Gastrocnemius medialis (tissue), 4 donors: ENCODE measurements at regions of chr18 and their contacts with region 1.

Region 1: DNA sequence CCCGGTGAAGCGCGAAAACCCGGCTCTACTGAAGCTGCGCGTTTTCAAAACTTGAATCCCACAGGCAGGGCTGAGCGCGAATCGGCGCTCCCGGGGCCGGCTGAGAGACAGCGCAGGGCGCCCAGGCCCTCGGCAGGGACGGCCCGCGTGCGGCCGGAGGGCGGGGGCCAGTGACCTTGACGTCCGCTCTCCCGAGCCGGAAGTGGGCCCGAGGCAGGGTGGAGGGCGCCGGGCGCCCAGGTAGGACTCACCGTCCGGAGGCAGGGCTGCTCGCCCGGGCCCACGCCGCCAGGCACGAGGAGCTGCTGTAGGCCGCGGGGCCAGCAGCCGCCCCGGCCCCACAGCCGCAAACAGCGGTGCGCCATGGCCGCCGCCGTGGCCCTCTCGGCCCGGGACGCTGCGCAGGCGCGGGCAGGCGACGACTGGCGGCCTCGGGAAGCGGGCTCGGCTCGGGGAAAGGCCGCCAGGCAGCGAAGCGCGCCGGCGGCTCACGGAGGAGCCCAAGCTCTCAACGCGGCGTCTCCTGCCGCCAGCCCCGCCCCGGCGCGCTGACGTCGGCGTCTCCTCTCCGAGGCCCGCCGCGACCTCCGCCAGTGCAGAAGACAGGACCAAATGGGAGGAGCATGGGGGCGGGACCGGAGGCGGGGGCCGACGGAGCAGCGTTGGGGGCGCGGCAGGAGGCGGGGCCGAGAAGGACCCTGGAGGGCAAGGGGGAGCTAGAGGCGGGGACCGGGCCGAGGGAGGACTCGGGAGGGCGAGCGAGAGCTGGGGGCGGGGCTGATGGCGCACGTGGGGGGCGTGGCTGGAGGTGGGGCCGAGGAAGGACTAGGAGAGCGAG is at the start of gene AFG3L2:
- DNase-seq: peak; percentile 100
- ATAC-seq: peak; percentile 79 to 80
- H3K4me3 ChIP-seq: peak within 1 kb of the TSS; percentile 64 to 94 (median 72)
- H3K27ac ChIP-seq: peak within 1 kb of the TSS; percentile 95 to 100 (median 97)
- H3K4me1 ChIP-seq: peaks cover 42 to 43% of the 10 kb centered on the region in 2 donors
- H3K27me3 ChIP-seq: no peaks in the 10 kb centered on the region
- CTCF ChIP-seq: peak in 2 of 5 experiments; percentile 6 to 21
- POLR2A ChIP-seq: peak; percentile 98 to 99
- total RNA-seq, gene AFG3L2: 102 to 166 (median 124) TPM

Region 2: DNA sequence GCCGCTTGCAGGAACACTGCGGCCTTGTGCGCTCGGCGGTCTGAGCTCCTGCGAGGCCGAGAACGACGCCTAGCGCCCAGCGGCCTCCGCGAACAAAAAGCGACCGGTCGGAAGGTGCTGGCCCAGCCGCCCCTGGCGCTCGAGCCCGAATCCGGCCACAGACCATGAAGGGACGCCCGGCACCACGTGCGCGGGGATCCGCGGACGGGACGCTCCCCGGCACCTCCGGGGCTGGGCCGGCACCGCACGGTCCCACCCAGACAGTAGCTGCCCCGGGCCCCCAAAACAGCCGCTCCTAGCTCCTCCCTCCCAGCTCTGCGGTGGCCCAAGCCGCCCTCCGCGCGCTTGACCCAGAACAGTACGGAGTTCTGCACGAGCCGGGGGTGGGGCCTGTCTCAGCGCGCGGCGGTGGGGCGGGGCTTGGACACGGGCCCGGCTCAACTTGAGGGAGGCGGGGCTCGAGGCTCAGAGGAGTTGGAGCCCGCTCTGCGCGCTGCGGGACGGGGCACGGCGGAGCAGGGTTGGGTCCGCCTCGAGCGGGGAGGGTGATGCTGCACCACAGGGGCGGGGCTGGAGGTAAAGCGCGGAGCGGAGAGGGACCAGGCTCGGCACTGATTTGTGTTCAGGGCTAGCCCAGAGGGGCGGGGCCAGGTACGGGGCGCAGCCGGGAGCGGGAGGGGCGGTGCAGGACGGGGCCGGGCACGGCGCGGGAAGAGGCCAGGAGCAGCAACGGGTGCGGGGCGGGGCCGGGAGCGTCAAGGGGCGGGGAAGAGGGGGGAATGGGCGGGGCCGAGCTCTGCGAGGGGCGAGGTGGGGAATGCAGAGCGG is 396.2 kb before region 1 on chr18:
- in situ Hi-C with region 1: no loop called
- intact Hi-C with region 1: loop called (anchors 10 kb)
- DNase-seq: peak; percentile 99
- ATAC-seq: peak; percentile 67 to 72
- H3K4me3 ChIP-seq: peak overlapping the region; percentile 71 to 94 (median 86)
- H3K27ac ChIP-seq: peak overlapping the region; percentile 97 to 100 (median 99)
- H3K4me1 ChIP-seq: peaks cover 21 to 38% of the 10 kb centered on the region in 2 donors
- H3K27me3 ChIP-seq: no peaks in the 10 kb centered on the region
- CTCF ChIP-seq: peak in 4 of 5 experiments; percentile 14 to 41 (median 21)
- POLR2A ChIP-seq: peak; percentile 98 to 99

Region 3: GRCh38 chr18:12406371-12407111 is 29.6 kb after region 1 on chr18:
- in situ Hi-C with region 1: no loop called
- intact Hi-C with region 1: loop called (anchors 1 kb)
- DNase-seq: no peak
- ATAC-seq: no peak
- H3K4me3 ChIP-seq: no peak overlapping the region
- H3K27ac ChIP-seq: no peak overlapping the region
- H3K4me1 ChIP-seq: peaks cover 0 to 6% of the 10 kb centered on the region in 2 donors
- H3K27me3 ChIP-seq: peaks cover 16 to 36% (median 33%) of the 10 kb centered on the region in 3 donors
- CTCF ChIP-seq: no peak
- POLR2A ChIP-seq: no peak

Region 4: DNA sequence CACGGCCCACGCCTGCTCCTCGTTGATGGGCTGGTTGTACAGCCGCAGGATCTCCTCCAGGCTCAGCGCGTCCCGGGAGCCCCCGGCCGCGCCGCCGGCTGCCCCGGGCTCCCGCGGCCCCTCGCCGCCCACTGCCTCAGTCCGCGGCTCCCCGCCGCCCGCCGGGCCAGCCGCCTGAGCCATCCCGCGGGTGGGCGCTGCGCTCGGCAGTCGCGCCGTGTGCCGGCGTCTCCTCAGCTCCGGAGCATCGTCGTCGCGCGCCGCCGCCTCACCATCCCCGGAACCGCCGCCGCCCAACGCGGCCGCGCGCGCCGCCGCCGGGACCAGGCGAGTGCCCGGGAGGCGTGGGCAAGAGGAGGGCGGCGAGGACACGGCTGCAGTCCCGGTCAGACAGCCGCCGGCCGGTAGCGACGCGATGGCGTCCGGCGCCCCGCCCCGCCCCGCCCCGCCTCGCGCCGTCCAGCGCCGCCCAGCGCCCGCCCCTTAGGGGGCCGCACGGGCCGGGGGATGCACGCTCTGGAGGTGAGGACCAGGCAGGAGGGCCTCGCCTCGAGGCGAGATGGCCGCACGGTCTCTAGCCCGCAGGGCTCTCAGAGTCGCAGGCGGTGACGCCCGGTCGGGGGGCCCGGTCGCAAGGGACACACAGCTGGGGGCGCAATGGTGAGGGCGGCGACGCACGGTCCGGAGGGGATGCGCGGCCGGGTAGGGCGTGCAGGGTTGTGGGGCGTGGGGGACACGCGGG is 280.9 kb after region 1 on chr18 and contains the start of gene SPIRE1:
- in situ Hi-C with region 1: loop called in 1 of 4 experiments (anchors 10 kb)
- intact Hi-C with region 1: loop called (anchors 5 kb)
- DNase-seq: peak; percentile 67 to 75
- ATAC-seq: peak; percentile 81 to 88
- H3K4me3 ChIP-seq: peak within 1 kb of the TSS; percentile 72 to 96 (median 80)
- H3K27ac ChIP-seq: peak within 1 kb of the TSS; percentile 88 to 99 (median 94)
- H3K4me1 ChIP-seq: peaks cover 1 to 18% of the 10 kb centered on the region in 2 donors
- H3K27me3 ChIP-seq: no peaks in the 10 kb centered on the region
- CTCF ChIP-seq: peak in 1 of 5 experiments; percentile 25
- POLR2A ChIP-seq: peak; percentile 79 to 84
- total RNA-seq, gene SPIRE1: 48.3 to 82.7 (median 55.1) TPM

Region 5: DNA sequence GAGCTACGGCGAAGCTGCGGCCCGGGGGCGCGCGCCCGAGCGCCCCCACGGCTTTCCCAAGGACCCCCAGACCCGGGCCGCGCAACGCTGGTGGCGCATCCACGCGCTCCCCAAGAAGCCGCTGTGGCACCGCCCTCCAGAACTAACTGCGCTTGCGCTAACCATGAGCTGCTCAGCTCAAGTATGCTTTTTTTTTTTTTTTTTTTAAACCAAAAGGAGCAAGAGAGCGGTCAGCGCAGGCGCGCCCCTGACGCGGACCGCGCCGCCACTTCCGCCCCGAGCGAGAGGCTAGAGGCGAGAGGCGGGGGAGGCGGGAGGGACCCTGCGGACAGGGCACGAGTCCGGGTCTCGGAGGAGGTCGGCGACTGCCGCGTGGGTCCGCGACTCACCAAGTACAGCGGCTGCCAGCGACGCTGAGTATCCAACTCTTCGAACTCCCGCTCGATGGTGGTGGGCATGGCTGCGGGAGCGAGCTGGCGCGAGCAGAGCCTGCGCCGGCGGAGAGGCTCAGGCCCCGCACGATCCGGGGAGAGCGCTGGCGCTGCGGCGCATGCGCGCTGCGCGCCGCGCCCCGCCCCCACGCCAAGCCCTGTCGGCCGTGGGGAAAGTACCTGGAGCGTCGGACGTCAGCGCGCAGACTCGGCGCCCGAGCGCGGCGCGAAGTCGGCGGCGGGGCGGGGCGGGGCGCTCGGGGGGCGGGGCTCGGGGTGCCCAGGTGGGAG is 506.9 kb after region 1 on chr18 and contains the start of gene PTPN2:
- in situ Hi-C with region 1: no loop called
- intact Hi-C with region 1: loop called (anchors 1 kb)
- DNase-seq: peak; percentile 88 to 92
- ATAC-seq: peak; percentile 91 to 95
- H3K4me3 ChIP-seq: peak within 1 kb of the TSS; percentile 72 to 90 (median 82)
- H3K27ac ChIP-seq: peak within 1 kb of the TSS; percentile 92 to 98 (median 96)
- H3K4me1 ChIP-seq: peaks cover 16 to 20% of the 10 kb centered on the region in 2 donors
- H3K27me3 ChIP-seq: no peaks in the 10 kb centered on the region
- CTCF ChIP-seq: no peak
- POLR2A ChIP-seq: peak; percentile 93 to 94
- total RNA-seq, gene PTPN2: 17.0 to 20.0 (median 17.5) TPM

Region 6: GRCh38 chr18:12990967-12991838 is 614.3 kb after region 1 on chr18 and contains the start of gene CEP192:
- in situ Hi-C with region 1: no loop called
- intact Hi-C with region 1: loop called (anchors 5 kb)
- DNase-seq: peak; percentile 98
- ATAC-seq: peak; percentile 97
- H3K4me3 ChIP-seq: peak within 1 kb of the TSS; percentile 81 to 95 (median 90)
- H3K27ac ChIP-seq: peak within 1 kb of the TSS; percentile 87 to 93 (median 92)
- H3K4me1 ChIP-seq: peaks cover 33 to 47% of the 10 kb centered on the region in 2 donors
- H3K27me3 ChIP-seq: no peaks in the 10 kb centered on the region
- CTCF ChIP-seq: peak in 1 of 5 experiments; percentile 10
- POLR2A ChIP-seq: peak; percentile 84 to 94
- total RNA-seq, gene CEP192: 6.8 to 8.3 (median 7.3) TPM

Region 7: GRCh38 chr18:13934676-13935075 is 1557.7 kb after region 1 on chr18:
- in situ Hi-C with region 1: no loop called
- intact Hi-C with region 1: no loop called
- DNase-seq: no peak
- ATAC-seq: no peak
- H3K4me3 ChIP-seq: no peak overlapping the region
- H3K27ac ChIP-seq: no peak overlapping the region
- H3K4me1 ChIP-seq: no peaks in the 10 kb centered on the region
- H3K27me3 ChIP-seq: no peaks in the 10 kb centered on the region
- CTCF ChIP-seq: no peak
- POLR2A ChIP-seq: no peak